ENCODE measurements at regions of chr14 and their contacts with region 1.

Region 1: GRCh38 chr14:75069811-75070782 is 656 bp downstream of the ZC2HC1C start:
- DNase-seq: peak in 1 of 3 donors; percentile 57
- ATAC-seq: peak; percentile 4 to 7
- H3K4me3 ChIP-seq: peak overlapping the region; percentile 43
- H3K27ac ChIP-seq: peak overlapping the region; percentile 84
- H3K4me1 ChIP-seq: peaks cover 4% of the 10 kb centered on the region
- H3K27me3 ChIP-seq: no peaks in the 10 kb centered on the region

Region 2: DNA sequence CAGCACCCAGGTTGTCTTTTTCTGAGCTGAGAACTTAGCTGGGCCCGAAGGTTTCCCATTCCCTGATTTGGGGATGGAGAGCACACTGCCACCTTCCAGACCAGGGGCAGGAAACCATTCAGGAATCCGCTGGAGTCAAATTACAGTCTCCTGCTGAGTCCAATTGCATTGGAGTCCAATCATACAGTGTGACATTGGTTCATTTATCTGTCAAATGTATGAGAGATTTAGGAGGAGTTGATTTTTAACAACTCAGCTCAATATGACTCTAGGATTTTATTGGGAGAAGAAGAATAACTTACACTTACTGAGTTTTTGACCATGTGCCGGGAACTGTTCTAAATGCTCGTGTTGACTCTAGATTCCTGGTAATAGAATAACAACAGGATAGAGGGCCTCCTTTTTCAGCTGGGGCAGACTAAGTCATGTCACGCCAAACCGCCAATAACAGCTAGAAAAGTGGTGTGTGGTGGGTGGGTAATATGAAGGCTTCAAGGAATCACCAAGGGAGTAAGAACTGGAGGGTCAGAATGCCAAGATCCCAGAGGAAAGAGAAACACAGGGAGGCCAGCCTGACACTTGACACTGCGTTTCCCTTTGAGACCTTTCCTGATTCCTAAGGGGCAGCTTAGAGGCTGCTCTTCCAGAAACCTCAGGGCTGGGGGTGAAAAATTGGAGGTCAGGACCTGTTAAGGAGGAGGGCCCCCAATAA is 655.5 kb before region 1 on chr14:
- intact Hi-C with region 1: no loop called
- DNase-seq: no peak
- ATAC-seq: no peak
- H3K4me3 ChIP-seq: no peak overlapping the region
- H3K27ac ChIP-seq: no peak overlapping the region
- H3K4me1 ChIP-seq: no peaks in the 10 kb centered on the region
- H3K27me3 ChIP-seq: no peaks in the 10 kb centered on the region

Region 3: GRCh38 chr14:75011356-75011994 is 58.6 kb before region 1 on chr14:
- intact Hi-C with region 1: loop called in 2 of 4 experiments (anchors 10 kb)
- DNase-seq: no peak
- ATAC-seq: peak; percentile 32 to 49
- H3K4me3 ChIP-seq: no peak overlapping the region
- H3K27ac ChIP-seq: peak overlapping the region; percentile 78
- H3K4me1 ChIP-seq: peaks cover 6% of the 10 kb centered on the region
- H3K27me3 ChIP-seq: no peaks in the 10 kb centered on the region

Region 4: DNA sequence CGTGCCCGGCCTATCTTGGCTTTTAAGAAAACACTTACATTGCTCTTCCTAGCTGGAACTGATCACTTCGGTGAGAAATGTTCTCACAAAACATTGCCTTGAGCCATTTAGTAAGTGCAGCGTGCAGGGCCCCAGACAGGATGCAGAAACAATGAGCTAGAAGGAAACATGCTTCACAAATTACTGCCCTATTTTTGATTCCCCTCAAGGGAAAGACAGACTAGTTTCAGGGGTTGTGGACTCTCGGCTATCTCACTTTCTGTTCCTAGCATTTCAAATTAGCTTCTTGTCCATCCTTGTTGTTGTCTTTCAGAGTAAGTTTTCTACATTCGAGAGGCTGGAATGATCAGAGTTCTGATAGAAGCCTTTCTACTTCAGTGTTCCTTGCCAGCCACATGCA is 890.1 kb after region 1 on chr14:
- intact Hi-C with region 1: no loop called
- DNase-seq: no peak
- ATAC-seq: no peak
- H3K4me3 ChIP-seq: no peak overlapping the region
- H3K27ac ChIP-seq: no peak overlapping the region
- H3K4me1 ChIP-seq: no peaks in the 10 kb centered on the region
- H3K27me3 ChIP-seq: no peaks in the 10 kb centered on the region